Activated T-helper 1 cell treated with anti-CD3 and anti-CD28 coated beads, Interleukin-12 subunit alpha, Interleukin-12 subunit beta, Interleukin-2, Interleukin-4 antibody, amounts not matched to agents 30 ng/mL and 10 ng/mL and 1 ng/mL, durations not matched to agents 14 hours and 24 hours and 36 hours (primary cell): ENCODE measurements at regions of chr1 and their contacts with region 1.

Region 1: GRCh38 chr1:156625436-156626078 is 6.3 kb downstream of the HAPLN2 start:
- DNase-seq: peak; percentile 38
- H3K4me3 Mint-ChIP-seq: peak overlapping the region; percentile 75
- H3K27ac Mint-ChIP-seq: peak overlapping the region; percentile 33
- H3K4me1 Mint-ChIP-seq: peaks cover 8% of the 10 kb centered on the region
- H3K27me3 Mint-ChIP-seq: peaks cover 74% of the 10 kb centered on the region

Region 2: DNA sequence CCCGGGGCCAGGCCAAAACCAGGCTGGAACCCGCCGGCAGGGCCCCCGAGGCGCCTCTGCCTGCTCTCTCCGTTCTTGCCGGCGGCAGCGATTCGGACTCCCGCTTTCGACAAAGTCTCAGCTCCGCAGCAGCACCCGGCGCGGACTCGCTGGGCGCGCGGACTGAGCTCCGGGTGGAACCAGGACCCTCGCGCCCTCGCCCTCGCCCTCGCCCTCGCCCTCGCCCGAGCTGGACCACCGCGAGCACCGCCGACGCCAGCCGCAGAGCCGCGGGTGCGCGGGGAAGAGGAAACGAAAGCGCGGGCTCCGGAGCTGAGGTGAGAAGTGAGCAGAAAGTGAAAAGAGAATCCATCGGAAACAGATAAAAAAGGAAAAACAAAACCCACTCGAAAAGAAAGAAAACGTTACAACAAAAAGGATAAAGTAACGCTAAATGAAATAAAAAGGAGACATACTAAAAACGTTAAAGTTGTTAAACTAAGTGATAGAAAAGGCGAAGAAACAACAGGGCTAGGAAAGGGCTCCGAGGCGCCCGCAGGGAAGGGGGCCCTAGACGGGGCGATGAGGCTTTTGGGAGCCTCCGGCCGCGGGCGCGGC is 189.9 kb before region 1 on chr1:
- intact Hi-C with region 1: loop called (anchors 5 kb)
- DNase-seq: no peak
- H3K4me3 Mint-ChIP-seq: peak overlapping the region; percentile 76
- H3K27ac Mint-ChIP-seq: peak overlapping the region; percentile 65
- H3K4me1 Mint-ChIP-seq: peaks cover 44% of the 10 kb centered on the region
- H3K27me3 Mint-ChIP-seq: peaks cover 77% of the 10 kb centered on the region

Region 3: DNA sequence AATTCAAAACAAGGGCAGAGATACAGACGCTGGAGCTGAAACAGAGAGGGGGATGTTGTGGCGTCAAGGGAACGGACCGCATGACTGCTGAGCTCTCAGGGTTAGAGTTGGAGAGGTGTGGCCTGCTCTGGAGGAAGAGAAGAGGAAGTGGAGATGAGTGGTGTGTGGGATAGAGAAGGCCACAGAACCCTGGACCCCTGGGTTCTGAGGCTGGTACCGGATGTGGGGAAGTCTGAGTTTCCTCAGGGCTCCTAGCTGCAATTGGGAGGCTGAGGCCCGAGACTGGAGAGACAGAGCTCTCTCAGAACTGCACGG is 18.2 kb after region 1 on chr1:
- intact Hi-C with region 1: loop called (anchors 1 kb)
- DNase-seq: peak; percentile 46
- H3K4me3 Mint-ChIP-seq: peak overlapping the region; percentile 3
- H3K27ac Mint-ChIP-seq: peak overlapping the region; percentile 0
- H3K4me1 Mint-ChIP-seq: peaks cover 42% of the 10 kb centered on the region
- H3K27me3 Mint-ChIP-seq: peaks cover 79% of the 10 kb centered on the region

Region 4: GRCh38 chr1:156659994-156660751 is 34.6 kb after region 1 on chr1:
- intact Hi-C with region 1: loop called (anchors 1 kb)
- DNase-seq: peak; percentile 88
- H3K4me3 Mint-ChIP-seq: peak overlapping the region; percentile 86
- H3K27ac Mint-ChIP-seq: peak overlapping the region; percentile 89
- H3K4me1 Mint-ChIP-seq: peaks cover 51% of the 10 kb centered on the region
- H3K27me3 Mint-ChIP-seq: peaks cover 25% of the 10 kb centered on the region

Region 5: GRCh38 chr1:156677616-156678596 is 52.3 kb after region 1 on chr1:
- intact Hi-C with region 1: loop called (anchors 1 kb)
- DNase-seq: no peak
- H3K4me3 Mint-ChIP-seq: no peak overlapping the region
- H3K27ac Mint-ChIP-seq: no peak overlapping the region
- H3K4me1 Mint-ChIP-seq: peaks cover 14% of the 10 kb centered on the region
- H3K27me3 Mint-ChIP-seq: peaks cover 63% of the 10 kb centered on the region

Region 6: GRCh38 chr1:156694690-156694962 is 69.1 kb after region 1 on chr1:
- intact Hi-C with region 1: no loop called
- DNase-seq: no peak
- H3K4me3 Mint-ChIP-seq: no peak overlapping the region
- H3K27ac Mint-ChIP-seq: no peak overlapping the region
- H3K4me1 Mint-ChIP-seq: peaks cover 22% of the 10 kb centered on the region
- H3K27me3 Mint-ChIP-seq: peaks cover 50% of the 10 kb centered on the region

Region 7: GRCh38 chr1:156705918-156706656 is 80.5 kb after region 1 on chr1:
- intact Hi-C with region 1: loop called (anchors 5 kb)
- DNase-seq: peak; percentile 47
- H3K4me3 Mint-ChIP-seq: peak overlapping the region; percentile 85
- H3K27ac Mint-ChIP-seq: peak overlapping the region; percentile 29
- H3K4me1 Mint-ChIP-seq: peaks cover 24% of the 10 kb centered on the region
- H3K27me3 Mint-ChIP-seq: peaks cover 43% of the 10 kb centered on the region

Region 8: GRCh38 chr1:156927215-156928042 is 301.9 kb after region 1 on chr1:
- intact Hi-C with region 1: loop called (anchors 1 kb)
- DNase-seq: peak; percentile 62
- H3K4me3 Mint-ChIP-seq: peak overlapping the region; percentile 55
- H3K27ac Mint-ChIP-seq: no peak overlapping the region
- H3K4me1 Mint-ChIP-seq: peaks cover 23% of the 10 kb centered on the region
- H3K27me3 Mint-ChIP-seq: peaks cover 75% of the 10 kb centered on the region